ENCODE measurements at regions of chr4 and their contacts with region 1.

Region 1: DNA sequence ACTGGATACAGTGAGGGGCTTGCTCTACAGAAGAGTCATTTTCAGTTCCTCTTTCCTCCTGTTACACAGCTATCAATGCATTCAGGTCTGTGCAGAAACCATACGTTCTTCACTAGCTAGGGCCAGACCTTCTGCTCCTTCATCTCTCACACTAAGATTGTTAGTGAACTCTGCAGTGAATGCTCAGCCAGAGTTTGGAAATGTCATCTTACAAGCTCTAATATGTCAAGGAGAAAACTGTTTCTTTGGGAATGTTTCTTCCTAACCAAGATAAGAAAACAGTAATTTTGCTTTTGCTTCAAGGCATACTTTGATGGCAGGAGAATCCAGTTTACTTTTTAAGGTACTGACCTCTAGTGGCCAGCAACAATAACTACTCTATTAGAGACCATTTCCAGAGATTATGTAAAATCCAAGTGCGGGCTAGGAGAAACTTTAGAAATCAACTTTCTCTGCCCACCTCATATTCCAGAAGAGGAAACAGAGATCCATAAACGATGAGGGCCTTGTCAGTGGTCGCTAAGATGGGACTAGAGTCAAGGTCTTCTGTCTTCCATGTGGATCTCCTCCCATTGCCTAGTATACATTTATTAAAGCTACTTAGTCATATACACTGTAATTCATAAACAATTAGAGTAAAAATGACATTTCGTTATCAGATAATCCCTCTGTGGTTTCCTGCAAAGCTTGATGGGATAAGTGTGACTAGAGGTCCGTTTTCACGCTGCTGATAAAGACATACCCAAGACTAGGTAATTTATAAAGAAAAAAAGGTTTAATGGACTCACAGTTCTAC is 12.1 kb upstream of the CC2D2A start:
- DNase-seq: peak; percentile 44
- H3K4me3 Mint-ChIP-seq: no peak overlapping the region
- H3K27ac Mint-ChIP-seq: no peak overlapping the region
- H3K4me1 Mint-ChIP-seq: peaks cover 8% of the 10 kb centered on the region
- H3K27me3 Mint-ChIP-seq: peaks cover 18% of the 10 kb centered on the region
- CTCF ChIP-seq: peak; percentile 60

Region 2: GRCh38 chr4:15231265-15232091 is 226.1 kb before region 1 on chr4:
- CTCF ChIA-PET with region 1: interaction called, 122 read pairs
- POLR2A ChIA-PET with region 1: no interaction called
- intact Hi-C with region 1: loop called (anchors 1 kb)
- DNase-seq: peak; percentile 86
- H3K4me3 Mint-ChIP-seq: no peak overlapping the region
- H3K27ac Mint-ChIP-seq: no peak overlapping the region
- H3K4me1 Mint-ChIP-seq: peaks cover 10% of the 10 kb centered on the region
- H3K27me3 Mint-ChIP-seq: no peaks in the 10 kb centered on the region
- CTCF ChIP-seq: peak; percentile 69

Region 3: DNA sequence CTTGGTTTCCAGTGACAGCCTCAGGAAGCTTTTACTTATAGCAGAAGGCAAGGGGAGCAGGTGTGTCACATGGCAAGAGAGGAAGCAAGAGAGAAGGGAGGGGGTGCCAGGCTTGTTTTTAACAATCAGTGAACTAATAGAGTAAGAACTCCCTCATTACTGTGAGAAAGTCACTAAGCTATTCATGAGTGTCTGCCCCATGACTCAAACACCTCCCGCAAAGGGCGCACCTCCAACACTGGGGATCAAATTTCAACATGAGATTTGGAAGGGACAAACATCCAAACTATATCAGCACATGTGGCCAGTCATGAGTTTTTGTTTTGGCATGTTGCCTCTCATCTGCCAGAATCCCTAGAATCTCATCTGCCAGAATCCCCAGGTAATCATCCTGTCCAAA is 213.2 kb before region 1 on chr4:
- CTCF ChIA-PET with region 1: interaction called, 122 read pairs
- POLR2A ChIA-PET with region 1: interaction called, 4 read pairs
- intact Hi-C with region 1: no loop called
- DNase-seq: peak; percentile 73
- H3K4me3 Mint-ChIP-seq: no peak overlapping the region
- H3K27ac Mint-ChIP-seq: no peak overlapping the region
- H3K4me1 Mint-ChIP-seq: peaks cover 8% of the 10 kb centered on the region
- H3K27me3 Mint-ChIP-seq: no peaks in the 10 kb centered on the region
- CTCF ChIP-seq: no peak

Region 4: GRCh38 chr4:15396157-15396800 is 61.3 kb before region 1 on chr4:
- CTCF ChIA-PET with region 1: interaction called, 40 read pairs
- POLR2A ChIA-PET with region 1: interaction called, 3 read pairs
- intact Hi-C with region 1: loop called (anchors 1 kb)
- DNase-seq: peak; percentile 63
- H3K4me3 Mint-ChIP-seq: no peak overlapping the region
- H3K27ac Mint-ChIP-seq: no peak overlapping the region
- H3K4me1 Mint-ChIP-seq: peaks cover 32% of the 10 kb centered on the region
- H3K27me3 Mint-ChIP-seq: no peaks in the 10 kb centered on the region
- CTCF ChIP-seq: peak; percentile 46

Region 5: DNA sequence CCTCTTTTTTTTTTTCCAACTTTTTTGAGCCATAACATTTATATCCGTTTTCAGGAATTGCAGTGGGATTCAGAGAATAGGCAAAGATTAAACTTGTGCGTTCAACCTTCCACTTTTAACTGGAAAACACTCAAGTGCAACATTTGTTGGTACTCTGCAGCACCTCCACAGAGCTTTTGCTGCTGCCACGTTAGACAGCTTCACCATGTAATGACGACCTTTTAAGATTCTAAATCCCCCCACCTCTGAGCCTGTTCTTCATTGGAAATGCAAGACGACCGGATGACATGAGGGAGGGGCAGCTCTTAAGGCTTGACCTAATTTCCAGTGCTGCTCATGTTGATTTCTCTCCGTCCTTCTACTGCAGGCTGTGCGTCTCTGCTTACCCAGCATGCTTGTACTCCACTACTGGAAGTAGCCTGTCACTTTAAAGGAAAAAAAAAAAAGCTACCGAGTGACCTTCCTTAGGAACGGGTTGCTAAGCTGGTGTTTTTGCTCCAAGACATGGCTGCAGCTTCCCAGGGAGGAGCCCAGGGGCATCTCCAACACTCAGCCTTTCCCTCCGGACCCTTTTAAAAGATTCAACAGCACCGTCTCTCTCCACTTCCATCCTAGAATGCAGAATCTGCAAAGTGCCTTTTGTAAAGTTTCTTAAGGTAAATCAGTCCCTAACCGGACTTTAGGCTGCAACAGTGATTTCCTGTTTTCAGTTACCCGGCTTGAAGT is 12.0 kb after region 1 on chr4 and contains the start of gene CC2D2A:
- CTCF ChIA-PET with region 1: interaction called, 29 read pairs
- POLR2A ChIA-PET with region 1: no interaction called
- intact Hi-C with region 1: no loop called
- DNase-seq: no peak
- H3K4me3 Mint-ChIP-seq: peak within 1 kb of the TSS; percentile 73
- H3K27ac Mint-ChIP-seq: no peak within 1 kb of the TSS
- H3K4me1 Mint-ChIP-seq: peaks cover 9% of the 10 kb centered on the region
- H3K27me3 Mint-ChIP-seq: no peaks in the 10 kb centered on the region
- CTCF ChIP-seq: no peak
- total RNA-seq, gene CC2D2A: 7.7 and 8.6 TPM in 2 replicates